Cardiac septum (tissue), 1 donor: ENCODE measurements at regions of chr7 and their contacts with region 1.

Region 1: GRCh38 chr7:151694828-151695580 is 175.3 kb upstream of the RHEB start:
- DNase-seq: peak; percentile 84

Region 2: GRCh38 chr7:151616443-151617213 is 78.4 kb before region 1 on chr7:
- intact Hi-C with region 1: no loop called
- DNase-seq: no peak

Region 3: DNA sequence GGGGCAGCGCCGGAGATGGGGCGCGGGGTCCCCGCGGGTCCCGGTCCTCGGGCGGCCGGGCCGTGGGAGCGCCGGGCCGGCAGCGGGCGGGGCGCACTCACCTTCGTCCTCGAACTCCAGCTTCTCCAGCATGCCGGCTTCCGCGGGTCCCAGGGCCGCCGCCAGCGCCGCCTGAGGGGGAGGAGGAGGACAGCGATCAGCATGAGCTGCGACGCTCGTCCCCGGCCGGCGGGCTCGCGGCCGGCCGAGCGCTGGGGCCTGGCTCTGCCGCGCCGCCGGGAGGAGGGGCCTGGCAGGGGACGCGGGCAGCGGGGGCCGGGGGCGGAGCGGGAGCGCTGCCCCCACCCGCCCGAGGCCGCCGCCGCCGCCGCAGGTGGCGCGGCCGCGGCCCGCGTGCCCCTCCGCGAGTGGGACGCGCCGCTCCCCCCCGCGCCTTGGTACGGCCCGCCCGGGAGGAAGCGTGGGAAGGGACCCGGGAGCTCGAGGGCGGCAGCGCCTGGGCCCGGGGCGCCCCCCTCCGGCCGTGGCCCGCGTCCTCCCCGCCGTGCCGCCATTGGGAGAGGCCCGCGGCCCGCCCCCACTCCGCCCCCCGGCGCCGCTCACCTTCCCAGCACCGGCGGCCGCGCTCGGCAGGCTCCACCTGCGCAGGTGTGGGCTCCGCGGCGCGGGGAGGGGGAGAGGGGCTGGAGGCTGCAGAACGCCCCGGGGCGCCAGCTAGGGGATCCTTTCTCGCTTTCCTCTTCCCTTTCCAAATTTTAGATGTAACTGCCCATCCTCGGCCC is 62.8 kb before region 1 on chr7:
- intact Hi-C with region 1: loop called (anchors 2 kb)
- DNase-seq: peak; percentile 95

Region 4: DNA sequence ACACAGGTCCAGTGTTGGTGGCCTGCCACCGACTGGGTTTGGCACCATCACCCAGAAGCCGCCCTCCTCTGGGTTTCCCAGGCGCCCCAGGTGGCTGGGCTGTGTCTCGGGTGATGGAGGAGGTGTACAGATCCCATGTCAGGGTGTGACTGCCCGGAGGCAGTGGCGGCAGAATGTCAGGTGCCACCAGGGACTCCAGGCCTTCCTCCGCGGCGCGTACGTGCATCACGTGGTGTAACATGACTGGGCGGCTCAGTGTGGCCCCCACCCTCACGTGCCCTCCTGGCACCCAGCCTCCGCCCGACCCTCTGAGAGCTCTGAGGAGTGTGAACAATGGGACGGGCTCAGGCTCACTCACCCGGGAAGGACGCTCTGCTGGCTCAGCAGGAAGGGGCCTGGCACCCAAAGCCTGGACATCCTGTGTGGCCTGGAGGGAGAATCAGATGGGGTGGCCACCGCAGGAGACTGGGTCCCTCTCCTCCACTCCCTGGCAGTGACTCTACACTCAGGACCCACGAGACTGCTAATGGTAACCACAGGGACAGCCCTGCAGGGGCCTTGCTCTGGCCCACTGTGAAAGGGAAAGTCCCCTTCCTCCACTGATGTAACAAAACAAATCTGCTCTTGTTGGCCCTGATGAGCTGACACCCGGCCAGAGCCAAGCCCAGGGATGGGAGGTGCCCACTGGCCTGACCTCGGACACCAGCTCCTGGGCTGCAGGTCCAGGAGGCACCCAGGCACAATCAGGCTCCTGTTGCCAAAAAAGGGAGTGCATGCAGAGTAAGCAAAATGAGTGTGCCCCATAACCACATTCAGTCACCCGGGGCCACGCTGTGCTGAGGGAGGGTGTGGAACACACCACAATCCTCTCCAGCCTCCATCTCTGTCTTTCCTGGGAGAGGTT is 17.2 kb after region 1 on chr7:
- intact Hi-C with region 1: loop called (anchors 2 kb)
- DNase-seq: no peak

Region 5: GRCh38 chr7:151742713-151743480 is 47.9 kb after region 1 on chr7:
- intact Hi-C with region 1: loop called (anchors 1 kb)
- DNase-seq: no peak

Region 6: DNA sequence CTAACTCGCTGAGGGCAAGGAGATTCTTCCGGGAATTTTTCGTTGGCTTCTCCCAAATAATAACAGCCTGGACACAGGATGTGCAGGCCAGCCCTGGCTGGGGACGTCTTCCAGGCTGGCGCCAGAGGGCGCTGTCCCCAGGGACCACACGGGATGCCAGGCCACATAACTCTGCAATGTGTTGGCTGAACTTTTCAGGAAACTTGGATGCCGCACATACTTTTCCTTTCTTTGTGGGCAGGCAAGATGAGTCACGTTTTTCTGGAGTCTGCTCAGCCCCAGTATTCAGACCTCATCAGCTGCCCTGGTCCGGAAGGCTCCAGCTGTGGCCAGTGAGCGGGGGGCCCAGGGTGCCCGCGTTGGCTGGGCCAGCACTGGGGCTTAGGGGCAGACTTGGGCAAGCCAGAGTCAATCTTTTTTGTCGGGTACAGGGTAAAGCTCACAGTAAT is 59.2 kb after region 1 on chr7:
- intact Hi-C with region 1: loop called (anchors 2 kb)
- DNase-seq: peak; percentile 86